Caco-2 (cell line): ENCODE measurements at regions of chr9 and their contacts with region 1.

Region 1: DNA sequence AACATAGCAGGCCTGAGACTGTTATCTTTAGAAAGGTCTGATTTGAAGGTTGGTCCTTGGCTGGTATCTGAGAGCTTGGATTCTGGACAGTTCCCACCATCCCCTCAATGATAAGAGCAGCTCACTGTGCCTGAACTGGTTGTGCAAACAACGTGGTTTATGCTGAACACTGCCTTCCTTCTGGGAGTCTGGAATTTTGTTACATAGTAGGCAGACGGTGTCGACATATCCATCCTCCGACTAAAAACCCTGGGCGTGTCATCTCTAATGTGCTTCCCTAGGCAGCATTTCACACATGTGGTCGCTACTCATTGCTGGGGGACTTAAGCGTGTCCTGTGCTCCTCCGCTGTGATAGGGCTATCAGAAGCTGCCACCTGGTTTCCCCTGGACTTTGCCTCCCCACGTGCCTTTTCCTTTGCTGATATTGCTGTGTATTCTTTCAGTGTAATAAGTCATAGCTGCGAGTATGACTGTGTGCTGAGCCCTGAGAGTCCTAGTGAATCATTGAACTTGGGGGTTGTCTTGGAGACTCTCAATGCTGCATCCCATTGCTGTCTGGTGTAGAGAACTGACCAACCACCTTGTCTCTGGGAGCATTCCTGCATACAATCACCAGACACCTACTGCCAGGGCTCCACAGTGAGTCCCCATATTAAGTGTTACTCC is 119.1 kb upstream of the TBC1D2 start:
- DNase-seq: peak; percentile 87 to 95
- H3K4me3 ChIP-seq: no peak overlapping the region
- H3K4me3 Mint-ChIP-seq: peak overlapping the region; percentile 47
- H3K27ac Mint-ChIP-seq: peak overlapping the region; percentile 88
- H3K4me1 ChIP-seq: peaks cover 31% of the 10 kb centered on the region
- H3K4me1 Mint-ChIP-seq: peaks cover 12% of the 10 kb centered on the region
- H3K27me3 ChIP-seq: no peaks in the 10 kb centered on the region
- H3K27me3 Mint-ChIP-seq: no peaks in the 10 kb centered on the region
- CTCF ChIP-seq: no peak

Region 2: DNA sequence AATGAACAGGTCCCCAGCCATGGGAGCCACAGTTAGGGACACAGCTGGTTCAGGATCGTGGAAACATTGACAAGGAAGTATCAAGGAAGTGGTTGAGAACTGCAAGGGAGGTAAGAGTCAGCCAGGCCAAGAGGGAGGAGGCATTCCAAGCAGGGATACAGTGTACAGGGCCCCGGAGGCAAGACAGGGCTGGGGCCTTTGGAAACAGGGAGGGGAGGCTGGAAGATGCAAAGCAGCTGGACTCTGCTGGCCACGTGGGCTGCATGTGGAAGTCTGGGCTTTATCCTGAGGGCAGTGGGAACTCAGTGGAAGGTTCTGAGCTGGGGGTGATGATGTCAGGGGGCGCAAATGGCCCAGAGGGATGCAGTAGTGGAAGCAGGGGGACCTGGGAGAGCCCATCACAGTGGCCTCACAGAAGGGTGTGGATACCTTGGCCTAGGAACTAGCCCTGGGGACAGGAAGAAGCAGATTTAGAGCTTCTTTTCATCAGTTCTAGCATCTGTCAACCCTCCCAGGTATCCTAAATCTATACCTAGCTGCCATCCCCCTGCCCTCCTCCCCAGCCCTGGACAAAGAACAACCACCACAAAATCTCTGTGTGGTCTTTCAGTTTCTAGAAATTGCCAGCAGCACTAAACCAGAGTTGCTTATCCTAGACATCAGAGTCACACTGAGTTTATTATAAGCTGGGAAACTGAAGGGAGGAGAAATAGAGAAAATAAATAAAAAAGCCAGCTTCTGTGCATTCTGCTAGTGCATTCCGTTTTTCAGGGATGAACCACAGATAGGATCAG is 1052.6 kb before region 1 on chr9:
- CTCF ChIA-PET with region 1: no interaction called
- POLR2A ChIA-PET with region 1: no interaction called
- intact Hi-C with region 1: loop called (anchors 10 kb)
- DNase-seq: no peak
- H3K4me3 ChIP-seq: no peak overlapping the region
- H3K4me3 Mint-ChIP-seq: no peak overlapping the region
- H3K27ac Mint-ChIP-seq: no peak overlapping the region
- H3K4me1 ChIP-seq: no peaks in the 10 kb centered on the region
- H3K4me1 Mint-ChIP-seq: no peaks in the 10 kb centered on the region
- H3K27me3 ChIP-seq: no peaks in the 10 kb centered on the region
- H3K27me3 Mint-ChIP-seq: no peaks in the 10 kb centered on the region
- CTCF ChIP-seq: no peak

Region 3: DNA sequence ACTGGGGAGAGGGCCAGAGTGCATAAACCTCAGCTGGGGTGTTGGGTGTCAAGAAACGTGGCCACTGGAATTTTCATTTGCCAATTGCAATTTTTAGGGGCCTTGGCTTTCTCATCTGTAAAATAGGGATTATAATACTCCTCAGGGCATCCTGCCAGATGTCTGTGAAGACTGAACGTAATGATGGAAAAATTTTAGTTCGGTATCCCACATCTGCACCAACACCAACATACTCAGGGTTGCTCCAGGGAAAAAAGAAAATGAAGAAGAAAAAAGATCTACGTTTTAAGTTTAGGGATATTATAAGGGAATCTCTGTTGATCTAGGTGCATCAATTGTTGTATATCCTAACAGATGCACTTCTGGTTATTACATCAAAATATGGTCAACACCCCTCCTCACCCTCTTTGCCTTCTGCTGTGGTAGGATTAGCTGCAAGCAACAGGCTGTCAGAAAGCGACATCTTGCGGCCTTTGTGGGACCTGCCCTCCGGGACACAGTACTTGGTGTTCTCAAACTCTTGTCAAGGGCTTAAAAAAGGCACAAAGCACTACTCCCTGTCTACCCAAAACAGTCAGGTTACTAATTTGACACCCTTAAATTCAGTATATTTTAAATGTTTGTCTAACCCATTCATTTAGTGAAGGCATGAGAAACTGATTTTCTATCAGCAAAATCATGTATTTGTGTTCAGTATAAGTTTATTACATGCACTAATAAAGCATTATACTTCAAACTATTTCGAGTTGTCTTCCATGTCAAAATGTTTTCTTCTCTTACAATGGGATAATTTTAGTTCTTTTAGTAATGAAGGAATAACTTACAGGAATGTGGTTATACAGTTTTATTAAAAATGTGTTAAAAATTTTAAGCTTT is 110.8 kb before region 1 on chr9:
- CTCF ChIA-PET with region 1: no interaction called
- POLR2A ChIA-PET with region 1: no interaction called
- intact Hi-C with region 1: no loop called
- DNase-seq: peak; percentile 85
- H3K4me3 ChIP-seq: no peak overlapping the region
- H3K4me3 Mint-ChIP-seq: no peak overlapping the region
- H3K27ac Mint-ChIP-seq: no peak overlapping the region
- H3K4me1 ChIP-seq: no peaks in the 10 kb centered on the region
- H3K4me1 Mint-ChIP-seq: peaks cover 17% of the 10 kb centered on the region
- H3K27me3 ChIP-seq: no peaks in the 10 kb centered on the region
- H3K27me3 Mint-ChIP-seq: no peaks in the 10 kb centered on the region
- CTCF ChIP-seq: peak; percentile 94 to 96

Region 4: GRCh38 chr9:98796364-98797101 is 422.0 kb after region 1 on chr9 and contains the start of gene ANKS6:
- CTCF ChIA-PET with region 1: no interaction called
- POLR2A ChIA-PET with region 1: no interaction called
- intact Hi-C with region 1: loop called (anchors 10 kb)
- DNase-seq: peak; percentile 77 to 93
- H3K4me3 ChIP-seq: peak within 1 kb of the TSS; percentile 71
- H3K4me3 Mint-ChIP-seq: peak within 1 kb of the TSS; percentile 73
- H3K27ac Mint-ChIP-seq: no peak within 1 kb of the TSS
- H3K4me1 ChIP-seq: peaks cover 17% of the 10 kb centered on the region
- H3K4me1 Mint-ChIP-seq: peaks cover 22% of the 10 kb centered on the region
- H3K27me3 ChIP-seq: no peaks in the 10 kb centered on the region
- H3K27me3 Mint-ChIP-seq: no peaks in the 10 kb centered on the region
- CTCF ChIP-seq: peak; percentile 25 to 49
- total RNA-seq, gene ANKS6: 21.1 and 27.8 TPM in 2 replicates